Activated naive CD4-positive, alpha-beta T cell treated with anti-CD3 and anti-CD28 coated beads, Interleukin-2, amount 10 ng/mL, durations not matched to agents 7 days and 5 days (primary cell): ENCODE measurements at regions of chr16 and their contacts with region 1.

Region 1: DNA sequence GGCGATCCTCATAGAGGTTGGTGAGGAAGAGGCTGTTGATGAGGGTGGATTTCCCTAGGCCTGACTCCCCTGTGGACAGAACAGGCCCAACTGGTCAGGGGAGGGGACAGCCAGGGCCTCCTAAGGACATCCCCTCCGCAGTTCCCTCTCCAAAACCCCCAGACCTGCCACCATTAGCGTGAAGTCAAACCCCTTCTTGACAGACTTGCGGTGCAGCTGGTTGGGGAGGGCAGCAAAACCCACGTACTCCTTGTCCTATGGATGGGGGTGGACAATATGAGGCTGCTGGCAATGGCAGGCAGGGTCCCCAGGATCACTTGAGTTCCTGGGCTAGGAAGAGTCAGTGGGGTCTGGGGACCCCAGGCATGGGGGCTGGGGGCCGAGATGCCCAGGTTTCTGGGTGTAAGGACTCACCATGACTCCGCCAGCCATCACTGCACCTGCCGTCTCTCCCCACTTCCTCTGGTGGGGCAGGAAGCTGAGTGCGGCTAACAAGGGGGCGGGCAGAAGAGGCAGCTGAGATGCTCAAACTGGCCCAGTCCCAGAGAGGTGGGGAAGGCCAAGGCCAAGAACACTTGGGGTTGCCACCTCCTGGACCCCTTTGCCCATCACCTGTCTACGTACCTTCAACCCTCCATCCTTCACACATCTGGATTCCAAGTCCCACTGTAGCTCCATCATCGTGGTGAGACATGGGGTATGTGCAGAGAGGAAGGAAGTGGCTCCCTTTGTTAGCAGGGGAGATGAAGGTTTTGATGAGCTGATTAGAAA is at the start of gene SEPTIN1:
- DNase-seq: peak; percentile 89
- H3K4me3 Mint-ChIP-seq: peak within 1 kb of the TSS; percentile 83
- H3K27ac Mint-ChIP-seq: peak within 1 kb of the TSS; percentile 97
- H3K4me1 Mint-ChIP-seq: peaks cover 66% of the 10 kb centered on the region
- H3K27me3 Mint-ChIP-seq: no peaks in the 10 kb centered on the region

Region 2: DNA sequence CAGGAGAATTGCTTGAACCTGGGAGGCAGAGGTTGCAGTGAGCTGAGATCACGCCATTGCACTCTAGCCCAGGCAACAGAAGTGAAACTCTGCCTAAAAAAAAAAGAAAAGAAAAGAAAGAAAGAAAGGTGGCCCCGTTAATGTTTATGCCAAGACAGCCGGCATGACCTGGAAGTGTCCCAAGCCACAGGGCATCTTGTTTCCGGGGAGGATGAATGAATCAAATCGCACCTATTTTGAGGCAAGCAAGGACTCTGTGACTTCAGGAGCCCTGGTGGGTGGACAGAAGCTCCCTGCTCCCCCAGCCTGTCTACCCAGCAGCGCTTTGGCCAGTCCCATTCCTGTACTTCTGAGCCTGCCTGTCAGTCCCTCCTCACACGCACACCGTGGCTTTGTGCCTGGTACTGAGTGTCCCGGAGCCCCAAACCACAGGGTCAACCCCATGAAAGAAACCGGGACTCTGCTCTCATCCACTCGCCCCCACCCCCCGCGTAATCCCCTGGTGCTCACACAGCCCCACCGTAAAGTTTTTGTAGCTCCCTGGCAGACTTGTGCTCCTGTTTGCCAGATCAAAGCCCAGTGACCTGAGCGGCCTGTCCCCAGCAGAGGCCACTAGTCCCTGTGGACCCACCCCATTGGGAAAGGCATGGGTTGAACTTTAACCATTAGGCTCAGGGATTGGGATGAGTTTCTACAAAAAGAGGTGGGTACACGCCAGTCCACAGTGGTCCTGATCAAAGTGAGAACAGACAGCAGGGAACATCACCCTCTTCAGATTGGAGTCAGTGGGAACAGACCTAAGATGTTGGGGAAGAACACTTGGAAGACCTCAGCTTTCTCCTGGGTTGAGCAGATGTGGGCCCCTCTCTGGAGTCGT is 46.5 kb before region 1 on chr16:
- CTCF ChIA-PET with region 1: no interaction called
- DNase-seq: peak; percentile 56
- H3K4me3 Mint-ChIP-seq: peak overlapping the region; percentile 77
- H3K27ac Mint-ChIP-seq: peak overlapping the region; percentile 93
- H3K4me1 Mint-ChIP-seq: peaks cover 27% of the 10 kb centered on the region
- H3K27me3 Mint-ChIP-seq: no peaks in the 10 kb centered on the region

Region 3: DNA sequence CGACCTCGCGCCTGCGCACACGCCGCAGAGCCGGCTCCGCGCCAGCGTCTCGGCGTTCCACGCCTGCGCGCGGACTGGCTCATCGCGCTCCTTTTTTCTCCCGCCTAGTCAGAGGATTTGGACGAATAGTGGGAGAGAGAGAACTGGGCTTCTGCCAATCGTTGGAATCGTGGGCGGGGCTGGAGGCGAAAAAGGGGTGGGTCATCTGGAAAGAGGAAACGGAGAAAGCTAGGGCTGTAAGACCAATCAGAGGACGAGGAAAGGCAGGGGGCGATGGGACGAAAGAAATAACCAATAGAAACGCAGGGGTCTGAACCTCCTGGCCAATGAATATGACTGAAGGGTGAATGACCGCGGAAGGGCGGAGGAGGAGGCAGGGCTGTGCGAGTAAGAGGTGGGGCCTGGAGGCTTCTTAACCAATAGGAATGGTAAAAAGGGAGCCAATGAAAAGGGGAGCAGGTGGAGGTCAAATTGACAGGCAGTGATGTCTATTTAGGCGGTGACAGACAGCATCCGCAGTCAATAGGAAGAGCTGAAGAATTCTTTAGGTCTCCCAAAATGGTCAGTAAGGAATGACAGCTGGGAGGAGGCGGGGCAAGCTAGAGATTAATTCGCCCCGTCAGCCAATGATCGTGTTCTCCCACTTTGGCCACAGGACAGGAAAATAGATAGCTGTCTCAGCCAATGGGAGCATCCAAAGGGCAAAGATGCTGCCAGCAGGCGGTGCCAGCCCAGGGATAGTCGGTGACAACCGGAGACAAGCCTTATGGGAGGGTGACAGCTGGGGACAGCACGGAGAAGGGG is 11.7 kb before region 1 on chr16 and contains the start of gene TBC1D10B:
- CTCF ChIA-PET with region 1: interaction called, 12 read pairs
- DNase-seq: peak; percentile 100
- H3K4me3 Mint-ChIP-seq: peak within 1 kb of the TSS; percentile 87
- H3K27ac Mint-ChIP-seq: peak within 1 kb of the TSS; percentile 92
- H3K4me1 Mint-ChIP-seq: peaks cover 46% of the 10 kb centered on the region
- H3K27me3 Mint-ChIP-seq: no peaks in the 10 kb centered on the region